Activated CD4-positive, alpha-beta memory T cell treated with anti-CD3 and anti-CD28 coated beads, Interleukin-2, amount 10 ng/mL, durations not matched to agents 7 days and 5 days (primary cell): ENCODE measurements at regions of chr10 and their contacts with region 1.

Region 1: DNA sequence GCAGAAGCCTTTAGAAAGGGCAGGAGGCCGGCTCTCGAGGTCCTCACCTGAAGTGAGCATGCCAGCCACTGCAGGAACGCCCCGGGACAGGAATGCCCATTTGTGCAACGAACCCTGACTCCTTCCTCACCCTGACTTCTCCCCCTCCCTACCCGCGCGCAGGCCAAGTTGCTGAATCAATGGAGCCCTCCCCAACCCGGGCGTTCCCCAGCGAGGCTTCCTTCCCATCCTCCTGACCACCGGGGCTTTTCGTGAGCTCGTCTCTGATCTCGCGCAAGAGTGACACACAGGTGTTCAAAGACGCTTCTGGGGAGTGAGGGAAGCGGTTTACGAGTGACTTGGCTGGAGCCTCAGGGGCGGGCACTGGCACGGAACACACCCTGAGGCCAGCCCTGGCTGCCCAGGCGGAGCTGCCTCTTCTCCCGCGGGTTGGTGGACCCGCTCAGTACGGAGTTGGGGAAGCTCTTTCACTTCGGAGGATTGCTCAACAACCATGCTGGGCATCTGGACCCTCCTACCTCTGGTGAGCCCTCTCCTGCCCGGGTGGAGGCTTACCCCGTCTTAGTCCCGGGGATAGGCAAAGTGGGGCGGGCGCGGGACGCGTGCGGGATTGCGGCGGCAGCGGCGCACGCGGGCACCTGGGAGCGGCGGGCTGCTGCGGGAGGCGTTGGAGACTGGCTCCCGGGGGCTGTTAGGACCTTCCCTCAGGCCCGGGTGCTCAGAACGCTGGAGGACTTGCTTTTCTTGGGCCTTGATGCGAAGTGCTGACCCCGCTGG is at the start of gene FAS:
- DNase-seq: peak; percentile 86
- H3K4me3 Mint-ChIP-seq: peak within 1 kb of the TSS; percentile 99
- H3K27ac Mint-ChIP-seq: peak within 1 kb of the TSS; percentile 99
- H3K4me1 Mint-ChIP-seq: peaks cover 71% of the 10 kb centered on the region
- H3K27me3 Mint-ChIP-seq: no peaks in the 10 kb centered on the region
- total RNA-seq, gene FAS: 91.1 to 96.4 TPM

Region 2: DNA sequence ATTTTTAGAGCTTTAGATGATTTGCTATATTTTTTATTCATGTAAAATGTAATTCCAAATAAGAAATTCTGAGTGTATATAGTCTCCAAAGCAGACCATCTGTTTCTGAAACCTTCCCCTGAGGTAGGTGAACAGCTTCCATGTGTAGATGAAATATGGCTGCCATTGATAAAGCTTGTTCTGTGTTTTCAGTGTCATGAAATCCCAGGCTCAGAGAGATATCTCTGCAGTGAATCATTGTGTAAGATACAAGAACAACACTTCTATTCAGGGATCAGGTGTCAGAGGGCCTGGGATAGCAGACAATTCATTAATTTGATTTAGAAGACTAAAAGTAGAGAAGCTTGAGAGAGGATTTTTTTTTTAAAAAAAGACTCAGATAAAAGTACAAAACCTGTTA is 67.1 kb before region 1 on chr10:
- CTCF ChIA-PET with region 1: no interaction called
- POLR2A ChIA-PET with region 1: no interaction called
- DNase-seq: no peak
- H3K4me3 Mint-ChIP-seq: no peak overlapping the region
- H3K27ac Mint-ChIP-seq: no peak overlapping the region
- H3K4me1 Mint-ChIP-seq: no peaks in the 10 kb centered on the region
- H3K27me3 Mint-ChIP-seq: no peaks in the 10 kb centered on the region

Region 3: DNA sequence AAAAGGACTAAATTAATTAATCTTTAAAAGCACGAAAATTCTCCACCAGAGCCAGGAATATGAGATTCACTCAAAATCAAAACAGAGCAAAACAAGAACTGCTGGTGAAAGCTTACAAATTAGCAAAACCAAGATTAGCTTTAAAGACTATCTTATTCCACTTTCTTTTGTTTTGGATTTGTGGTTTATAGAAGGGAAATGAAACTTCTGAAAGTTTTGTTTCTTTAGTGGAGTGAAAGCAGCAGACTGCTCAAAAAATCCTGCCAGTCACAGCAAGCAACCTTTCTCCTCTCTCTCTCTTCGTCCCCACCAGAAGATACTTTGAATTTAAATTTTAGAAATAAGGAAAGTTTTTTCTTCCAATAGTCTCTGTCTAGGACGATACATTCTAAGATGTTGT is 45.8 kb before region 1 on chr10:
- CTCF ChIA-PET with region 1: no interaction called
- POLR2A ChIA-PET with region 1: interaction called, 10 read pairs
- DNase-seq: no peak
- H3K4me3 Mint-ChIP-seq: no peak overlapping the region
- H3K27ac Mint-ChIP-seq: no peak overlapping the region
- H3K4me1 Mint-ChIP-seq: peaks cover 17% of the 10 kb centered on the region
- H3K27me3 Mint-ChIP-seq: no peaks in the 10 kb centered on the region

Region 4: DNA sequence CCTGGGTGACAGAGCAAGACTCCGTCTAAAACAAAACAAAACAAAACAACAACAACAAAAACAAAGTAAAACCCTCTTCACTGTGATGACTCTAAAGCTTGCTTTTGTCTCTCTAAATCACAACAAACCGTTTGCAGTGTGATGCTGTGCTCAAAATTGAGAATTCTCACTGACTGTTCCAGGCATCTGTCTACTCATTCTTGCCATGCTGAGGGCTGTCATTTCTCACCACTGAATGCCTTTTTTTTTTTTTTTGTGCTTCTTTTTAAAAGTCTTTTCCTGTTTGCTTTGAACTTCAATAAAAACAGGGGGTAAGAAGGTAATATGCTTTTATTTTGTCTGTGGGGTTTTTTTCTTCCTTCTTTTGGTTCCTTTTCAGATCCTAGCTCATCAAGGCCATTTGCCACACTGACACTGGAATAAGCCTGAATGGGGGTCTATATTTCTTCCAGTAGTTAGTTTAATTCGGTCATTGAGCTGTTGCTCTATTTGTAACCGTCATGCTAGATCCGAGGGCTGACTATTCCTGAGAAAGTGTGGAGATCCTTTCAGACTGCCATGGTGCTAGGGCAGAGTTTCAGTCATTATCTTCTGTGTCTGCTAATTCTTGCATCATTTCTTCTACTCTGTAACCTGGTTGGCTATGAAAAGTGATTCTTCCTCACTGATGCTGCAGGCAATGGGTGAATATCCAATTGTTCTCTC is 10.6 kb after region 1 on chr10:
- CTCF ChIA-PET with region 1: interaction called, 9 read pairs
- POLR2A ChIA-PET with region 1: interaction called, 142 read pairs
- DNase-seq: peak; percentile 58
- H3K4me3 Mint-ChIP-seq: peak overlapping the region; percentile 71
- H3K27ac Mint-ChIP-seq: peak overlapping the region; percentile 84
- H3K4me1 Mint-ChIP-seq: peaks cover 72% of the 10 kb centered on the region
- H3K27me3 Mint-ChIP-seq: no peaks in the 10 kb centered on the region

Region 5: DNA sequence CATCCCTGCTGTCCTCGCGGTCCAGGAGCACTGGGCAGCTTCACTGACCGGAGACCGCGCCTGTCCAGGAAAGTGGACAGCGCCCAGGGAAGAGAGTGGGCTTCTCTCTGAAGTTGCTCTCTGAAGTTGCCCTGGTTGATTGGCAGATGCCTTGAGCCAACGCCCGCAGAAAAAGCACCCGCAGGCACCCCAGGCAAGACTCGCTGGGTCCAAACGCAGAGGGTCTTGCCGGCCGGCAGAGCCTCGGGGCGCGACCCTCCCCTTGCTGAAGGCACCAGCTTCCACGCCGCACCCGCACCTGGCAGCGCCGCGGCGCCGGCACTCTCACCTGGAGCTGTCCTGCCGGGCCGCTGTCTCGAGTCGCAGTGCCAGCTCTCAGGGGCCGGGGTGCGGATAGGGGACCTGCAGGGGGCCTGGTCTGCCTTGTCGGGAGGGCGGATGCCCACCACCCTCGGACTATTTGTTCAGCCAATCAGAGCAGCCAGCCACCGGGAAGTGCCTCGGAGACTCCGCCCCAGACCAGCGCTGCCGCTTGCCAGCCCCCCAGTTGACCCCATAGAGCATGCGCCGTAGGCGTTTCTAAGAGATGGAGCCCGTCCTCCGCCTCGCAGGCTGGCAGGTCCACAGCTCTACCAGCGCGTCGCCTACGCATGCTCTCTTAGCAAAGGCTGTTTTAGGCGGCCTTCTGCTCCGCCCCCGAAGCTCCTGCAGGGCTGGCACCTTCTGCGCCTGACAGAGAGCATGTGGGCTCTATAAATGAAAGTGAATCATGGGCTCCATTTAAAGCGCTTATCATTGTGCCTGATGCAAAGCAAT is 261.0 kb after region 1 on chr10 and contains the start of gene LIPA:
- CTCF ChIA-PET with region 1: no interaction called
- POLR2A ChIA-PET with region 1: interaction called, 11 read pairs
- DNase-seq: peak; percentile 95
- H3K4me3 Mint-ChIP-seq: peak within 1 kb of the TSS; percentile 86
- H3K27ac Mint-ChIP-seq: peak within 1 kb of the TSS; percentile 65
- H3K4me1 Mint-ChIP-seq: peaks cover 25% of the 10 kb centered on the region
- H3K27me3 Mint-ChIP-seq: peaks cover 9% of the 10 kb centered on the region
- total RNA-seq, gene LIPA: 40.3 to 42.4 TPM